SK-N-SH (cell line): ENCODE measurements at regions of chr16 and their contacts with region 1.

Region 1: GRCh38 chr16:30585400-30586189 is at the start of gene ZNF785:
- DNase-seq: peak; percentile 97
- H3K4me3 ChIP-seq: peak within 1 kb of the TSS; percentile 67 to 86
- H3K27ac ChIP-seq: peak within 1 kb of the TSS; percentile 87
- H3K4me1 ChIP-seq: peaks cover 0 to 4% of the 10 kb centered on the region in 2 experiments; a peak in 1 of 4 replicates
- H3K27me3 ChIP-seq: no peaks in the 10 kb centered on the region
- CTCF ChIP-seq: no peak; the same call in 1 of the 2 replicates
- EP300 ChIP-seq: peak in 1 of 2 experiments; percentile 16; a peak in 1 of 4 replicates
- RAD21 ChIP-seq: peak; percentile 36
- polyA plus RNA-seq, gene ZNF785: 8.8 and 10.6 TPM in 2 replicates

Region 2: GRCh38 chr16:30482366-30482765 is 103.2 kb before region 1 on chr16:
- CTCF ChIA-PET with region 1: no interaction called
- POLR2A ChIA-PET with region 1: no interaction called
- DNase-seq: no peak
- H3K4me3 ChIP-seq: no peak overlapping the region
- H3K27ac ChIP-seq: no peak overlapping the region
- H3K4me1 ChIP-seq: no peaks in the 10 kb centered on the region
- H3K27me3 ChIP-seq: peaks cover 10% of the 10 kb centered on the region
- CTCF ChIP-seq: peak; percentile 37
- EP300 ChIP-seq: no peak
- RAD21 ChIP-seq: no peak

Region 3: GRCh38 chr16:30609926-30610839 is 24.6 kb after region 1 on chr16 and contains the start of gene ZNF689:
- CTCF ChIA-PET with region 1: interaction called, 5 read pairs
- POLR2A ChIA-PET with region 1: interaction called, 14 read pairs
- DNase-seq: peak; percentile 96
- H3K4me3 ChIP-seq: peak within 1 kb of the TSS; percentile 64 to 87
- H3K27ac ChIP-seq: peak within 1 kb of the TSS; percentile 87
- H3K4me1 ChIP-seq: peaks cover 6% of the 10 kb centered on the region in 2 experiments; a peak in 2 of 4 replicates
- H3K27me3 ChIP-seq: no peaks in the 10 kb centered on the region
- CTCF ChIP-seq: 0 out of 2 replicates have a peak, but pooled peaks have one; percentile 7
- EP300 ChIP-seq: no peak
- RAD21 ChIP-seq: no peak
- polyA plus RNA-seq, gene ZNF689: 2.9 and 3.4 TPM in 2 replicates

Region 4: DNA sequence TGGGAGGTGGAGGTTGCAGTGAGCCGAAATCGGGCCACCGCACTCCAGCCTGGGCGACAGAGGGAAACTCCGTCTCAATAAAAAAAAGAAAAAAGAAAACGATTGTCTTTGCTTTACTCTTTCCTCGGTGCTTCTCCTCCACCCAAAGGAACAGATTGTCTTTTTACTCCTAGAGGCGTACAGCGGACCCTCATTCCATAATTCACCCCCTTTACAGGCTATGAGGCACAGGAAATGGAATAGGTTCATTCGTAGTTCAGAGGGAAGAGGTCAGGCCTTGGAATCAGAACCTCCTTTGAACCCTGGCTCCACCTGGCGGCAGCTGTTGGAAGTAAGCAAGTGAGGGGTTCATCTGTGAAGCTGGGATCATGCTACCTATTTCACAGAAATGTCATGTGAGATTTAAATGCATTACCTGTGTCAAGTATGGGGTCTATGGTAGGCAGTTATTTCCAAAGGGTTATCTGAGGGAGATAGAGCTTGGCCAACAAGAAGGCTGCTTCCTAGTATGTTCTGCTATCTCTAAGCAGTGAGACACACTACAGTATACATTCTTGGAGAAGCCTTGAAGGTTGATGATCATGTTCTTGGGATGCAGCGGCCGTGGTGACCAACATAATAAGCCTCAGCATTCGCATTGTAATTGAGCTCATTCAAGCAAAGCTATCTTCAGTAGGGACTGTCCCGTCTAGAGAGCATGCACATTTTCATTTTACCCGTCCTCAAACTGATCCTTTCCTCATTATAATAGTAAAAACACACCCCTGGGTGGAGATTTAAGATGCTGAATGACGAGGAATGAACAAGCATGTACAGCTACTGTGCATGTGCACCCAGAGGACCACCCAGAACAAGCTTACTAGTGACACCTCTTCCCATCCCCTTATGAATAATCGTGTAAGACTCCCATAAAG is 43.3 kb after region 1 on chr16:
- CTCF ChIA-PET with region 1: interaction called, 18 read pairs
- POLR2A ChIA-PET with region 1: no interaction called
- DNase-seq: peak; percentile 74
- H3K4me3 ChIP-seq: peak overlapping the region in 1 of 2 experiments; percentile 4; a peak in 1 of 4 replicates
- H3K27ac ChIP-seq: no peak overlapping the region
- H3K4me1 ChIP-seq: no peaks in the 10 kb centered on the region
- H3K27me3 ChIP-seq: no peaks in the 10 kb centered on the region
- CTCF ChIP-seq: peak; percentile 91
- EP300 ChIP-seq: no peak
- RAD21 ChIP-seq: peak; percentile 87